T-cell (primary cell): ENCODE measurements at regions of chr7 and their contacts with region 1.

Region 1: GRCh38 chr7:16420649-16421332 is 547 bp downstream of the CRPPA start:
- DNase-seq: peak; percentile 4 to 91 (median 79)
- ATAC-seq: peak; percentile 89 to 92 (median 90)
- H3K4me3 ChIP-seq: peak overlapping the region; percentile 75 to 78
- H3K4me3 Mint-ChIP-seq: peak overlapping the region; percentile 77 to 88 (median 88)
- H3K27ac ChIP-seq: peak overlapping the region; percentile 92
- H3K27ac Mint-ChIP-seq: peak overlapping the region; percentile 70 to 90
- H3K4me1 ChIP-seq: peaks cover 12 to 14% of the 10 kb centered on the region in 2 experiments
- H3K4me1 Mint-ChIP-seq: peaks cover 13 to 25% (median 16%) of the 10 kb centered on the region in 3 donors
- H3K27me3 ChIP-seq: no peaks in the 10 kb centered on the region
- H3K27me3 Mint-ChIP-seq: peaks cover 0 to 21% of the 10 kb centered on the region in 2 donors

Region 2: DNA sequence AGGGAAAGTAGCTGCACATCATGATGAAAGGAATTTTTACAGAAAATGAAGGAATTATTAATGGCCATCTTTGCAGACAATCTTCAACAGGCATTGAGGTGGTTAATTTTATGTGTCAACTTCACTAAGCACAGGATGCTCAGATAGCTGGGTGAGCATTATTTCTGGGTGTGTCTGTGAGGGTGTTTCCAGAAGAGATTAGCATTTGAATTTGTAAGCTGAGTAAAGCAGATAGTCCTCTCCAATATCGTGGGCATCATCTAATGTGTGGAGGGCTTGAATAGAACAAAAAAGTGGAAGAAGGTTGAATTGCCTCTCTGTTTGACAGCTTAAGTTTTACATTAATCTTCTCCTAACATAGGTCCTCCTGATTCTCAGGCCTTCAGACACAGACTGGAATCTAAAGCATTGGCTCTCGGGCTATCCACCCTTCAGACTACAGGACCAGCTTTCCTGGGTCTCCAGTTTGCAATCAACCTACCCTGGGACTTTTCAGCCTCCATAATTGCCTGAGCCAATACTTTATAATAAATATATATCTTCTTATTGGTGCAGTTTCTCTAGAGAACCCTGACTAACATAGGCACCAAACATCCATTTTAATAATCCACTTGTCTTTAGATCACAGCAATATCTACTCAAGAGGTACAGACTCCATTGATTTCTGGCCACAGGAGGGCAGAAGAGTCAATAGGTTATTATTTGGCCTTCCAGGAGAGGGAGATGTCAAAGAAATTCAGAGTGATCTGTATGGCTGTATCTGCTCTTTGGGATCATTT is 11.0 kb after region 1 on chr7:
- CTCF ChIA-PET with region 1: interaction called, 4 to 18 read pairs
- POLR2A ChIA-PET with region 1: interaction called in 1 of 2 experiments, 3 read pairs
- DNase-seq: peak in 16 of 35 experiments; percentile 8 to 64 (median 14)
- ATAC-seq: peak; percentile 45 to 84 (median 66)
- H3K4me3 ChIP-seq: no peak overlapping the region
- H3K4me3 Mint-ChIP-seq: no peak overlapping the region
- H3K27ac ChIP-seq: no peak overlapping the region
- H3K27ac Mint-ChIP-seq: no peak overlapping the region
- H3K4me1 ChIP-seq: no peaks in the 10 kb centered on the region
- H3K4me1 Mint-ChIP-seq: peaks cover 0 to 2% (median 0%) of the 10 kb centered on the region in 3 donors
- H3K27me3 ChIP-seq: no peaks in the 10 kb centered on the region
- H3K27me3 Mint-ChIP-seq: no peaks in the 10 kb centered on the region

Region 3: GRCh38 chr7:16471933-16472332 is 51.1 kb after region 1 on chr7:
- CTCF ChIA-PET with region 1: no interaction called
- POLR2A ChIA-PET with region 1: no interaction called
- DNase-seq: no peak
- ATAC-seq: no peak
- H3K4me3 ChIP-seq: no peak overlapping the region
- H3K4me3 Mint-ChIP-seq: no peak overlapping the region
- H3K27ac ChIP-seq: no peak overlapping the region
- H3K27ac Mint-ChIP-seq: no peak overlapping the region
- H3K4me1 ChIP-seq: no peaks in the 10 kb centered on the region
- H3K4me1 Mint-ChIP-seq: no peaks in the 10 kb centered on the region
- H3K27me3 ChIP-seq: peaks cover 0 to 3% of the 10 kb centered on the region in 2 experiments
- H3K27me3 Mint-ChIP-seq: peaks cover 9 to 19% of the 10 kb centered on the region in 2 donors

Region 4: GRCh38 chr7:17185690-17186070 is 764.9 kb after region 1 on chr7:
- CTCF ChIA-PET with region 1: no interaction called
- POLR2A ChIA-PET with region 1: no interaction called
- DNase-seq: peak in 1 of 35 experiments; percentile 3
- ATAC-seq: peak in 1 of 4 experiments; percentile 62
- H3K4me3 ChIP-seq: no peak overlapping the region
- H3K4me3 Mint-ChIP-seq: no peak overlapping the region
- H3K27ac ChIP-seq: no peak overlapping the region
- H3K27ac Mint-ChIP-seq: peak overlapping the region; percentile 50 to 53
- H3K4me1 ChIP-seq: no peaks in the 10 kb centered on the region
- H3K4me1 Mint-ChIP-seq: peaks cover 15 to 16% (median 15%) of the 10 kb centered on the region in 3 donors
- H3K27me3 ChIP-seq: no peaks in the 10 kb centered on the region
- H3K27me3 Mint-ChIP-seq: no peaks in the 10 kb centered on the region